ENCODE measurements at regions of chr22 and their contacts with region 1.

Region 1: DNA sequence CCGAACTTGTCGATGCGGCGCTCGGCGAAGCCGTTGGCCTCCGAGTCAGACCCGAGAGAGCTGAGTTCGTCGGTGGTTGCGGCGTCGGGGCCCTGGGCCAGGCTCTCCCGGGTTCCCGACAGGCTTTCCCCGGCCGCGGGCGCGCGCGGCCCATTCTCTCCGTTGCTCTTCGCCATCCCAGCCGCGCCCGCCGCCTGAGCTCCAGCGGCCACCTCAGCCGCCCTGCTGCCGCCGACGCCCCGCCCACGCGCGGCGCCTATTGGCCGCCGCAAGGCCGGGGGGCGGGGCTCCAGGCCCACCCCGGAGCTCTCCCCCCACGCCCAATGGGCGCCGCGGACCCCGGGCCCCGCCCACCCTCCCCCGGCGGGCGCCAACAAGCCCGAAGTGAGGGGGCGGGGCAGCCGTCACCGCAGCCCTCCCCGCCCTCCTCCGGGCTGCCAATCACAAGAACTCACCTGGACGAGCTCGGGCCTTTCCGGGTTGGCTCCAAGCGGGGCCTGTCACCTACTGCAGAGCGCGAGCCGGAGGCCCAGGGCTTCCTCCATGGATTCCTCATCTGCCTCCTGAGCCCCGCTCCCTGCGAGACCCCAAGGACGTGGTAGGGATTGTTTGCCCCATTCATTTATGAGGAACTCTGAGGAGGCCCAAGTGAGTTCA is at the start of gene TBC1D10A:
- DNase-seq: peak; percentile 86
- H3K4me3 ChIP-seq: peak within 1 kb of the TSS; percentile 62 to 67 (median 64)
- H3K27ac ChIP-seq: peak within 1 kb of the TSS; percentile 38
- H3K4me1 ChIP-seq: peaks cover 13% of the 10 kb centered on the region
- H3K27me3 ChIP-seq: no peaks in the 10 kb centered on the region
- CTCF ChIP-seq: no peak
- POLR2A ChIP-seq: peak; percentile 63
- total RNA-seq, gene TBC1D10A: 10.0 and 11.3 TPM in 2 replicates

Region 2: DNA sequence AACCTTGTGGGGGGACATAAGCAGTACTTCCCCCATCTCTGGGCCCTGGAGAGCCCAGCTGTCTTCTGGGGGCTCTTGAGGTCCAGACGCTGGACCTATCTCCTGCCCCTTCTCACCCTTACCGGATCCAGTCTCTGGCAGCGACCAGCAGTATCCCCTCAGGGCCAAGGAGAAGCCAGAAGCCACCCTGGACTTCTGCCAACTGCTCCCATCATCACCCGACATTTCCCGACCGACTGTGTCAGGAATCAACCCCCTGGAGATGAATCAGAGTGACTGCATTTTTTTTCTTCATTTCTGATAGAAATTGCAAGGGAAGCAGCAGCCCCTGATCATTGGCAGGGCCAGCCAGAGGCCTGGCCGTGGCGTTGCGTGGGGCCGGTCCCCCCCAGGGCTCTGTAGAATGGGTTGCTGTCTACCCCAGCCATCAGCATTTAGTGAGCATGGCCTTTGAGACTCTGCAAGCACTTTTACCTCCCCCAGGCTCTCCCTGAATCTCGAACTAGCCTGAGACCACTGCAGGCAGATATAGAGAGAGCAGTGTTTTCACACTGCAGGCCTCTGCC is 75.1 kb before region 1 on chr22:
- CTCF ChIA-PET with region 1: no interaction called
- POLR2A ChIA-PET with region 1: no interaction called
- dilution Hi-C with region 1: no loop called
- intact Hi-C with region 1: no loop called
- DNase-seq: no peak
- H3K4me3 ChIP-seq: no peak overlapping the region
- H3K27ac ChIP-seq: no peak overlapping the region
- H3K4me1 ChIP-seq: peaks cover 7% of the 10 kb centered on the region
- H3K27me3 ChIP-seq: peaks cover 9 to 14% of the 10 kb centered on the region in 2 experiments
- CTCF ChIP-seq: no peak
- POLR2A ChIP-seq: no peak

Region 3: GRCh38 chr22:30262917-30263741 is 63.7 kb before region 1 on chr22:
- CTCF ChIA-PET with region 1: interaction called, 11 read pairs
- POLR2A ChIA-PET with region 1: no interaction called
- dilution Hi-C with region 1: no loop called
- intact Hi-C with region 1: no loop called
- DNase-seq: peak; percentile 57
- H3K4me3 ChIP-seq: no peak overlapping the region
- H3K27ac ChIP-seq: no peak overlapping the region
- H3K4me1 ChIP-seq: peaks cover 6% of the 10 kb centered on the region
- H3K27me3 ChIP-seq: no peaks in the 10 kb centered on the region
- CTCF ChIP-seq: peak; percentile 82 to 93
- POLR2A ChIP-seq: no peak

Region 4: DNA sequence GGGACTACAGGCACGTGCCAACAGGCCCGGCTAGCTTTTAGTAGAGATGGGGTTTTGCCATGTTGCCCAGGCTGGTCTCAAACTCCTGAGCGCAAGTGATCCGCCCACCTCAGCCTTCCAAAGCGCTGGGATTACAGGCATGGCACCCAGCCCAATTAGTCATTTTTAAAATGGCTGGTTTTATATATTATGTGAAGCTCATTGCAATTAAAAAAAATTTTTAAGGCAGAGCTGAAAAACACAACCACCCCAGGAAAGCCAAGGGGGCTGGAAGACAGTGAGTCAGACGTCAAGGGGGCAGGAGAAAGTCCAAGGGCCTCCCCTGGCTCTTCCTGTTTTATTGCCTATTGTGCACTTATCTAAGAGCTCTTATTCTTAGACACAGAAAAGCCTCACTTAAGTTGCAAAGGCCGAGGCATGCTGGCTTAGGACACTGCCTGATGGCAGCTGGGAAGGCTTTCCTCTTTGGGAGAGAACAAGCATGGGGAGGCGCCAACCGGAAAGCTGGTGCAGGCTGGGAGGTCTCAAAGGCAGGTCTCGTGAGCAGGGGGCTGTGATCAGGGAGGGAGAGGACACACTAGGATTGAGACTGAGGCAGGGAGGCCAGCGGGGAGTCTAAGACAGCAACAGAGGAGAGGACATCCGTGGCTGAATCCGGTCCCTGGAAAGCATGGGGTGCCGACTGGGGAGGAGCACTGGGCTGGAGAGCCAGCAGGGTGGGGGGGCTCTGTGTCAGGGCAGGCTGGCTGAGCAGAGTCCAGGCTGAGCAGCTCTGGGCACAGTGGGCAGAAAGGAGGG is 49.1 kb before region 1 on chr22:
- CTCF ChIA-PET with region 1: no interaction called
- POLR2A ChIA-PET with region 1: no interaction called
- dilution Hi-C with region 1: no loop called
- intact Hi-C with region 1: no loop called
- DNase-seq: peak; percentile 89
- H3K4me3 ChIP-seq: no peak overlapping the region
- H3K27ac ChIP-seq: peak overlapping the region; percentile 47
- H3K4me1 ChIP-seq: peaks cover 16% of the 10 kb centered on the region
- H3K27me3 ChIP-seq: no peaks in the 10 kb centered on the region
- CTCF ChIP-seq: no peak
- POLR2A ChIP-seq: no peak

Region 5: DNA sequence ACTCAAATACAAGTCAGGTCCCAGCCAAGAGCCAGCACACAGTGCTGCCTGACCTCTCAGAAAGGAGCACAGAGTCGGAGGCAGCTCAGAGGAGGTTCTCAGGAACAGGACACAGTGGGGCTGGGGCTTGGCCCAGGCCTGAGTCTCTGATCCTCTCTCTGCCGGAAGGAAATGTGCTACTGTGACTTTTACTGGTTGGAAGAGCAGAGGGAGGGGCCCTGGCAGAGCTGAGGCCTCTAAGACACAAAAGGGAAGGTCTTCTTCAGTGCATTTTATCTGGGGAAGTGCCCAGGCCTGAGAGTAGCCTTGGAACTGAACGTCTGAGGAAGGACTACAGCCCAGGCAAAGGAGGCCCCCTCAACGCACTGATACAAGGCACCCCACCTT is 21.3 kb before region 1 on chr22:
- CTCF ChIA-PET with region 1: interaction called, 16 read pairs
- POLR2A ChIA-PET with region 1: no interaction called
- dilution Hi-C with region 1: no loop called
- intact Hi-C with region 1: no loop called
- DNase-seq: peak; percentile 55
- H3K4me3 ChIP-seq: no peak overlapping the region
- H3K27ac ChIP-seq: peak overlapping the region; percentile 41
- H3K4me1 ChIP-seq: peaks cover 36% of the 10 kb centered on the region
- H3K27me3 ChIP-seq: no peaks in the 10 kb centered on the region
- CTCF ChIP-seq: no peak
- POLR2A ChIP-seq: peak; percentile 41

Region 6: DNA sequence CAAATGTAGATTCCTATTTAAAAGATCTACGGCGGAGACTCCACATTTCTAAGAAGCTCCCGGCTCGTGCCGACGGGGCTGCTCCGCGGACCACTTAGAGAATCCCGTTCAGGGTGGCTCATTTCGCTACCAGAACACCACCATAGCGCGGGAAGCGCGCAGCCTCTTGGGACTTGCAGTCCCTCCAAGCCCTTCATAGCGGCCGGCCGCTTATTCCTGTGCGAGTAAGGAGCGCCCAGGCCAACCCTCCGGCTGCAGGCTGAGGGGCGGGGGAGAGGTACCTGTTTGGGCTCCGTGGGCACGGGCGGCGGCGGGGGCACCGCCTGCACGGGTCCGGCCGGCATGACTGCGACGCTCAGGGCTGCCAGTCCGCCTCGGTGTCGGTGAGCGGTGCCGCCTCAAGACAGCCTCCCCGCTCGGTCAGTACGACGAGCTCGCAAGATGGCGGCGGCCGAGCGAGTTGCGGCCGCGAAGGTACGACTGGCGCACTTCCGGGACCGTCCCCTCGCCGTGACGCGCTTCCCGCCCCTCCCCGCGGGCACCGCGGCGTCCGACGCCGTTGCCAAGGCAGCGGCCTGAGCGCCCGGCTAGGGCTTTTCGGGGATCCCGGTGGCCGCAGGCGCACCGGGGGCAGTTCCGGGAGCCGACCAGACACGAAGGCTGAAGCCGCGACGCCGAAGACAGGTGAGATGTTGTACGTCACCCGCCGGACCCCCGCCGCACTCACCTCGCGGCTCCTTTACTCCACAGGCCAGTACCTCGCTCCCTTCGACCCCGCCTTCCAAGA is 29.8 kb after region 1 on chr22 and contains the starts of genes CCDC157 and SF3A1:
- CTCF ChIA-PET with region 1: no interaction called
- POLR2A ChIA-PET with region 1: interaction called, 4 read pairs
- dilution Hi-C with region 1: no loop called
- intact Hi-C with region 1: loop called (anchors 2 kb)
- DNase-seq: peak; percentile 95
- H3K4me3 ChIP-seq: peak within 1 kb of the TSS; percentile 64 to 94 (median 84)
- H3K27ac ChIP-seq: peak within 1 kb of the TSS; percentile 81
- H3K4me1 ChIP-seq: peaks cover 15% of the 10 kb centered on the region
- H3K27me3 ChIP-seq: no peaks in the 10 kb centered on the region
- CTCF ChIP-seq: no peak
- POLR2A ChIP-seq: peak; percentile 94
- total RNA-seq, gene CCDC157: 1.7 and 2.1 TPM in 2 replicates
- total RNA-seq, gene SF3A1: 173 and 187 TPM in 2 replicates

Measured in endothelial cell of umbilical vein (primary cell).